ENCODE measurements at regions of chr15 and their contacts with region 1.

Region 1: GRCh38 chr15:97960364-97961066 is at the start of gene ARRDC4:
- DNase-seq: peak; percentile 95 to 100 (median 100)
- ATAC-seq: peak; percentile 92 to 97 (median 93)
- H3K4me3 ChIP-seq: peak within 1 kb of the TSS; percentile 82 to 96 (median 87)
- H3K27ac ChIP-seq: peak within 1 kb of the TSS; percentile 79 to 95 (median 90)
- H3K4me1 ChIP-seq: peaks cover 6 to 25% (median 9%) of the 10 kb centered on the region in 3 donors
- H3K27me3 ChIP-seq: no peaks in the 10 kb centered on the region
- CTCF ChIP-seq: no peak
- total RNA-seq, gene ARRDC4: 10.8 to 32.7 (median 14.4) TPM

Region 2: GRCh38 chr15:98035577-98036010 is 75.1 kb after region 1 on chr15:
- intact Hi-C with region 1: loop called in 1 of 3 experiments (anchors 10 kb)
- DNase-seq: no peak
- ATAC-seq: no peak
- H3K4me3 ChIP-seq: no peak overlapping the region
- H3K27ac ChIP-seq: no peak overlapping the region
- H3K4me1 ChIP-seq: no peaks in the 10 kb centered on the region
- H3K27me3 ChIP-seq: no peaks in the 10 kb centered on the region
- CTCF ChIP-seq: no peak

Measured in pancreas (tissue), 10 donors.